Activated T-helper 1 cell treated with anti-CD3 and anti-CD28 coated beads, Interleukin-12 subunit alpha, Interleukin-12 subunit beta, Interleukin-2, Interleukin-4 antibody, amounts not matched to agents 30 ng/mL and 10 ng/mL and 1 ng/mL, durations not matched to agents 14 hours and 24 hours and 36 hours (primary cell): ENCODE measurements at regions of chr7 and their contacts with region 1.

Region 1: GRCh38 chr7:100015232-100016209 is at the start of gene ZKSCAN1:
- DNase-seq: peak; percentile 82
- H3K4me3 Mint-ChIP-seq: peak within 1 kb of the TSS; percentile 98
- H3K27ac Mint-ChIP-seq: peak within 1 kb of the TSS; percentile 92
- H3K4me1 Mint-ChIP-seq: peaks cover 55% of the 10 kb centered on the region
- H3K27me3 Mint-ChIP-seq: no peaks in the 10 kb centered on the region
- total RNA-seq, gene ZKSCAN1: 62.5 and 63.1 TPM in 2 replicates

Region 2: DNA sequence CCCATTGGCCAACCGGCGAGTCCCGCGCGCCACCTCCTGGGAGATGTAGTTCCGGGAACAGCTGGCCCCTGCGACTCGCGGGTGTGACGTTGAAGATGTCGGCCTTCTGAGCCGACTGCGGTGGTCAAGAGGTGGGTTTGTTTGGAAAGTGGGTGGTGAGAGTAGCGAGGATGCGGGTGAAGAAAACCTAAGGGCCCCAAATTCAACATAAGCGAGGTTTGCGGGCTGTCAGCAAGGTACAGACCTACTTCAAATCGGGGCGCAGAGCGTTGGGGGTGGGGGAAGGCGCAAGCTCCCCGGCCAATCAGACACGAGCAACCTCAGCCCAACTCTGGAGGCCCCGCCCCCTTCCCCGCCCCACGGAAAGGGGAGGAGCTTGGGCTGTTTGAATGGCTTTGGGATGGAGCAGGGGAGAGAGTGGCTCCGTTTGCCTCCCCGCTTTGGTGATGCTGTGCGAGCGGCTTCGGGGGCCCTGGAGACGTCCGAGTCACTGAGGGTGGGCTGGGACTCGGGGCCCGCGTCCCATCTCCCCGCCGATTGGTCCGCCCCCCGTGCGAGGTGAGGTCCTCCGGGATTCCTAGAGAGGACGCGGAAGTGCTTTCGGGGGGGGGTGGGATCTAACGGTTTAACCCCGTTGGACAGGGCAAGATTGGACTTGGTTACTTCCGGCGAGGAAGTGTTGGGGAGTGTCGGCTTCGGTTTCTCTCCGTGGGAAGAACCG is 510.8 kb before region 1 on chr7 and contains the start of gene ZKSCAN5:
- intact Hi-C with region 1: loop called (anchors 2 kb)
- DNase-seq: peak; percentile 96
- H3K4me3 Mint-ChIP-seq: peak within 1 kb of the TSS; percentile 90
- H3K27ac Mint-ChIP-seq: peak within 1 kb of the TSS; percentile 96
- H3K4me1 Mint-ChIP-seq: peaks cover 19% of the 10 kb centered on the region
- H3K27me3 Mint-ChIP-seq: no peaks in the 10 kb centered on the region
- total RNA-seq, gene ZKSCAN5: 8.0 and 8.1 TPM in 2 replicates

Region 3: GRCh38 chr7:99624484-99624883 is 391.0 kb before region 1 on chr7:
- intact Hi-C with region 1: loop called (anchors 10 kb)
- DNase-seq: peak; percentile 64
- H3K4me3 Mint-ChIP-seq: peak overlapping the region; percentile 85
- H3K27ac Mint-ChIP-seq: peak overlapping the region; percentile 98
- H3K4me1 Mint-ChIP-seq: peaks cover 61% of the 10 kb centered on the region
- H3K27me3 Mint-ChIP-seq: peaks cover 2% of the 10 kb centered on the region

Region 4: GRCh38 chr7:99719996-99720769 is 295.3 kb before region 1 on chr7:
- intact Hi-C with region 1: no loop called
- DNase-seq: no peak
- H3K4me3 Mint-ChIP-seq: no peak overlapping the region
- H3K27ac Mint-ChIP-seq: no peak overlapping the region
- H3K4me1 Mint-ChIP-seq: peaks cover 7% of the 10 kb centered on the region
- H3K27me3 Mint-ChIP-seq: peaks cover 4% of the 10 kb centered on the region

Region 5: DNA sequence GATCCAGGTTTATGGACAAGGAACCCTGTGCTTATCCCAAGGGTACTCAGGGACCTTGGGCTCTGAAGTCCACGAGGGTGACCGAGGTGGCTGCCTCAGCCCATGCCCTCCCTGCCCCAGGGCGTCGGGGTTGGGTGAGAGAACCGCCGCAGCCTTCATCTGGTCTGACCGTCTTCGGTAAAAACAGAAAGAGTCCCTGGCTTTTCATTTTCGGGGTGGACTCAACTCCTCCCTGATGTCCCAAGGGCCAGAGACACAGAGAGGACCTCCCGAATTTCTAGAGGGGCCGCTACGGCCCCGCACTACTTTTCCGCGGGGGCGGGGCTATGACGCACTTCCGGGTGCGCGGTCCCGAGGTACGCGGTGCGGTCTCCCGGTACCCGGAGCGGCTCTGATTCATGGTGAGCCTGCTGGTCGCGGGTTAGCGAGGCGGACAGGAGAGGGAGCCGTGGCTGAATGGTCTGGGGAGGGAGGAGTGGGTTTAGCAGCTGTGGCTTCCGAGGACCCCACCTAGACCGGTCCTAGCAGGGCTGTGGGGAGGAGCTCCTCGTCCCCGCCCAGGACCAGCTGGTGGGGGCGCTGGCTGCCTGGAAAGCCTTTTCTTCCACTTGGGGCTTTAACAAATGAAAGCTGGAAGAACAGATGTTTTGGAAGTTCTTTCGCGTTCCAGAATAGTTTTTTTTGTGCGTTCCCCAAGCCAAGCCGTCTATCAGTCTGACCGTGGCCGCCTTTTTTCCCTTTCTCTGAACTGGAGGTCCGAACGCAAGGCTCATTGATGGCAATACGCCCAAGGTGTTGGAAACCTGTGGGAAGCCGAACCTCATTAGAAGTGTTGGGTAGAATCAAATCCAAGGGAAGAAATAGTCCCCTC is 34.2 kb after region 1 on chr7 and contains the start of gene ZSCAN21:
- intact Hi-C with region 1: loop called (anchors 1 kb)
- DNase-seq: peak; percentile 79
- H3K4me3 Mint-ChIP-seq: peak within 1 kb of the TSS; percentile 88
- H3K27ac Mint-ChIP-seq: peak within 1 kb of the TSS; percentile 92
- H3K4me1 Mint-ChIP-seq: peaks cover 13% of the 10 kb centered on the region
- H3K27me3 Mint-ChIP-seq: peaks cover 2% of the 10 kb centered on the region
- total RNA-seq, gene ZSCAN21: 6.8 and 9.8 TPM in 2 replicates

Region 6: GRCh38 chr7:100088621-100089457 is 73.3 kb after region 1 on chr7 and contains the start of gene COPS6:
- intact Hi-C with region 1: loop called (anchors 2 kb)
- DNase-seq: peak; percentile 82
- H3K4me3 Mint-ChIP-seq: peak within 1 kb of the TSS; percentile 90
- H3K27ac Mint-ChIP-seq: peak within 1 kb of the TSS; percentile 93
- H3K4me1 Mint-ChIP-seq: peaks cover 29% of the 10 kb centered on the region
- H3K27me3 Mint-ChIP-seq: peaks cover 6% of the 10 kb centered on the region
- total RNA-seq, gene COPS6: 101 and 115 TPM in 2 replicates